PC-9 (cell line): ENCODE measurements at regions of chr5 and their contacts with region 1.

Region 1: GRCh38 chr5:66239034-66239433 is 94.9 kb downstream of the SREK1 start:
- DNase-seq: peak in 1 of 2 experiments; percentile 33
- H3K4me3 ChIP-seq: no peak overlapping the region
- H3K27ac ChIP-seq: no peak overlapping the region
- H3K4me1 ChIP-seq: no peaks in the 10 kb centered on the region
- H3K27me3 ChIP-seq: peaks cover 8% of the 10 kb centered on the region; the same call in 1 of the 2 replicates
- CTCF ChIP-seq: peak; percentile 72

Region 2: DNA sequence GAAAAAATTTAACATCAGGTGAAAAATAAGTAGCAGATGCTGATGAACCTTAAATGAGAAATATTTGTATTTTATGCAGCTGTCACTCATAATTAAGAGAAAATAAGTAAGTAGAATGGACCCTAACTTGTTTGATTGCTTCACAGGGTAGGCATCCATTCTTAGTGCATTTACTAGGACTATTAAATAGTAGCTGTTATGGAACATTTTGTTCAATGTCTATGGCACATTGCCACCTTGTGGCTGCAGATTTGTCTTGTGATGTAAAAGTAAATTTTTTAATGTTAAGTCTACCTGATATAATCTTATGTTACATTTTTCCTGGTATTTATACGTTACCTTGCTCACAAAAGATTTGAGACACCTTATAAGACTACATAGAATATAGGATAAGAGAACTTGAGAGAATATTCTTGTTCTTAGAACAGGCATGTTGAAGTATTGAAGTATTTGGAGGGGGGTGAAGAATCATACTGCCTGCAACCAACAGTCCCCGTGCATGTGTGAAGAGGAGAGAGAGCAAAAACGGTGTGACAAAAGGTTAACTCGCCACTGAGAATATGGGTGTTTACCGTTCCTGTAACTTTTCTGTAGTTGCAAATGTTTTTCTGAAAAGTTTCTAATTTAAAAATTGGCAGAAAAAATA is 518.3 kb after region 1 on chr5:
- CTCF ChIA-PET with region 1: no interaction called
- POLR2A ChIA-PET with region 1: no interaction called
- intact Hi-C with region 1: loop called (anchors 1 kb)
- DNase-seq: peak in 1 of 2 experiments; percentile 20
- H3K4me3 ChIP-seq: no peak overlapping the region
- H3K27ac ChIP-seq: no peak overlapping the region
- H3K4me1 ChIP-seq: no peaks in the 10 kb centered on the region
- H3K27me3 ChIP-seq: 0 out of 2 replicates have a peak, but pooled peaks cover 12% of the 10 kb centered on the region
- CTCF ChIP-seq: peak; percentile 67